Activated CD4-positive, alpha-beta T cell treated with anti-CD3 and anti-CD28 coated beads for 36 hours (primary cell): ENCODE measurements at regions of chr1 and their contacts with region 1.

Region 1: DNA sequence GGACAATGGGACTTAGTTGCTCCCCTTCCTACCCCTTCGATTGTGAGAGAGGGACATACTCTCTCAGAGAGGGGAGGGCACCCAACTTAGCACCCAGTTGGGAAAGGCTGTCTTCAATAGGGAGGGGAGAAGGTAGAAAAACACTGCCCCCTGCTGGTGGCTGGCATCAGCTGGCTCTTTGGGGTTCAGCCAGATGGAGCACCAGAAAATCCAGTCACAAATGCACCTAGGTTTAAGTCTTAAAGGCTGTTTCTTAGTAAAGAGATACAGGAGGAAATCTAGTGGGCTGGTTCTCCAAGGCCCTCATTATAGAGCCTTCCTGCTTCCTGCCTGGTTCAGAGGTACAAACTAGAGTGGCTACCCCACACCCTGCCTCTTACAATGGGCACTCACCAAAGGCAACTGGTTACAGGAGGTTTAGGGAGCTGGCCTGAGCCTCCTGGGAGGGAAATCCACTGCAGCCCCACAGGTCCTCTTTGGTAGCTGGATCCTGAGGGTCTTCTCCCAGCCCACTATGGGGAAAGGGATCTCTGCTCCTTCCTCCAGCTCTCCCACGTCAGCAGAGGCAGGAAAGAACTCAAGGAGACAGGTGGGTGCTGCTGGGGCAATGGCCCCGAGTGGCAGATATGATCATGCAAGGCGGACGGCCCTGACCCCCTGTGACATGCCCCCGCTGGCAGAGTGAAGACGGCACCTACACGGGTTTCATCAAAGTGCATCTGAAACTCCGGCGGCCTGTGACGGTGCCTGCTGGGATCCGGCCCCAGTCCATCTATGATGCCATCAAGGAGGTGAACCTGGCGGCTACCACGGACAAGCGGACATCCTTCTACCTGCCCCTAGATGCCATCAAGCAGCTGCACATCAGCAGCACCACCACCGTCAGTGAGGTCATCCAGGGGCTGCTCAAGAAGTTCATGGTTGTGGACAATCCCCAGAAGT is 28.3 kb downstream of the EIF2D start:
- DNase-seq: peak; percentile 93
- ATAC-seq: peak; percentile 31
- H3K4me3 Mint-ChIP-seq: peak overlapping the region; percentile 65
- H3K27ac Mint-ChIP-seq: peak overlapping the region; percentile 99
- H3K4me1 Mint-ChIP-seq: peaks cover 87% of the 10 kb centered on the region
- H3K27me3 Mint-ChIP-seq: no peaks in the 10 kb centered on the region

Region 2: DNA sequence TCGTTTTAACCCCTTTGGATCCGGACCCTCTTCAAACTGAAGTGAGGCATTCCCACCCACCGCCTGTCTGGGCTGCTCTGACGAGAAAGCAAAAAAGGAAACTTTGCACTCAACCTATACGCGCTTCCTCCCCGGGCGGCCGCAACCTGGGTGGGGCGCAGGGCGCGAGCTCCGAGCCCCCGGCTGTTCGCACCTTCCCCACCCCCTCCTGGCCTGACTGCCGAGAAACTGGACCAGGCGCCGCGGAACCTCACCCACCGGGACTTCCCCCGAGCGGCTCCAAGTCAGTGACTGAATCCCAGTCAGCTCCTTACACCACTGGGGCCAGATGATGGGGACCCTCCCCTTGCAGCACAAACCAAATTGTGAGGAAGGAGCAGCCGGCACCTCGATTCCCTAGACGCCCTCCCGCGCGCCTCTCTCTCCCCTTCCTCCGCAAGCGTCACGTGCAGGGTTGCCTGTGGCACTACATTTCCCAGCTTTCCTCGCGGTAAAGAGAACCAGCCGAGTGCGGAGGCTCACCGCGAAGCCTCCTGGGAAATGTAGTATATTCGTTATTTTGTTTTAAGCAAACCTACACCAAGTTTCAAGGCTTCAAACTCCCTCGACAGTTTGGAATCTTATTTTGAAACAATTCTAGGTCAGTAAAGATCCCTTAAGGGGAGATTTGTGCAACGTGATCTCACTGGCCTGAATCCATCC is 808.8 kb before region 1 on chr1 and contains the start of gene RAB29:
- CTCF ChIA-PET with region 1: no interaction called
- POLR2A ChIA-PET with region 1: no interaction called
- intact Hi-C with region 1: loop called in 1 of 2 experiments (anchors 10 kb)
- DNase-seq: peak; percentile 93
- ATAC-seq: peak; percentile 80
- H3K4me3 Mint-ChIP-seq: peak within 1 kb of the TSS; percentile 89
- H3K27ac Mint-ChIP-seq: peak within 1 kb of the TSS; percentile 90
- H3K4me1 Mint-ChIP-seq: peaks cover 55% of the 10 kb centered on the region
- H3K27me3 Mint-ChIP-seq: no peaks in the 10 kb centered on the region
- total RNA-seq, gene RAB29: 29.3 to 29.4 TPM

Region 3: DNA sequence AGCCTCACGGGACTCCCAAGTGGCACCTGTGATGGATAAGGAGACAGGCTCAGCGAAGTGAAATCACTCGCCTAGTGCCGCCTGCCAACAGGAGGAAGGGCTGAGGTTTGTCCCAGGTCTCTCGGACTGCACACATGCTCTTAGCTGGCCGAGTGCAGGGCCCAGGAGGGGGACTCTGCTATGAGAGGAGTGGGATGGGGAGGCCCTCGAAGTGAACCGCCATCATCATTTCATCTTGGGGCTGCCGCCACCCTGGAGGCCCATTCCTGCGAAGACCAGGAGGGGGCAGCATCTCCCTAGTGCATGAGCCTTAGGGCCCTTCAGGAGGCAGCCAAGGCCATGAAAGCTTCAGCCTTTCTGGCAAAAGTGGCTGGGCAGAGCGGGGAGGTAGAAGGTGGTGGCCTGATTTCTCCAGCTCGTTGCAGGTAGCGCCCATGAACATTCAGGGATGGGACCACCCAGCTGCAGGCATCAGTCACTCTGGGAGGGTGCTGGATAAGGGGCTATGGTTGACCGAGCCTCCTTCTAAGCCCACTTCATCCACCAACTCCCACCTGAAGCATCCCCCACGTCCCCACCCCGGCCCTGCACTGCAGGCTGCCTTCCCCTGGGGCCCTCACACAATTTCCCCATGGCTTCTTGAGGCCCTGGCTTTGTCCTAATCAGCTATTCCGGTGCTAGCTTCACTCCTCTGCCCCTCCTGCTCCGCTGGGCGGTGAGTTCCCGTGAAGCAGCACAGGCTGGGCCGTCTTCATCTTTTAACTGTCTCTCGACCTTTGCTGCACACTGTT is 93.8 kb before region 1 on chr1:
- CTCF ChIA-PET with region 1: interaction called, 49 read pairs
- POLR2A ChIA-PET with region 1: no interaction called
- intact Hi-C with region 1: loop called (anchors 1 to 5 kb)
- DNase-seq: peak; percentile 89
- ATAC-seq: peak; percentile 95
- H3K4me3 Mint-ChIP-seq: no peak overlapping the region
- H3K27ac Mint-ChIP-seq: no peak overlapping the region
- H3K4me1 Mint-ChIP-seq: no peaks in the 10 kb centered on the region
- H3K27me3 Mint-ChIP-seq: no peaks in the 10 kb centered on the region

Region 4: DNA sequence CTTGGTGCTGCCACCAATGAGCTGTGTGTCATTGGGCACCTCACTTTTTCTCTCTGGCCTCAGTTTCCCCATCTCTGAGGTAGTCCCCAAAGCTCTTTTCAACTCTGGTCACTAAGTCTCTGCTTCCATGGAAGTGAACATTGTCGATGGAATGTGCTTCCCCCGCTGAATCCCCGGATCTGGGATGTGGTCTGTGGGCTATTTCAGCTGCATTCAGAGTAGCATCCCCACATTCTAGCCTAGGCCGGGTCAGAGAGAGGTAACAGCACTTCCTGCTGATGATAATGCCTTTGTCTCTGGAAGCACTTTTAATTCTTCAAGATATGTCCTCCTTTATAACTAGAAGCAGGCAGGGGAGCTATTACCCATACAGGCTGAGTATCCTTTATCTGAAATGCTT is 46.8 kb before region 1 on chr1:
- CTCF ChIA-PET with region 1: interaction called, 198 read pairs
- POLR2A ChIA-PET with region 1: interaction called, 5 read pairs
- intact Hi-C with region 1: no loop called
- DNase-seq: no peak
- ATAC-seq: no peak
- H3K4me3 Mint-ChIP-seq: no peak overlapping the region
- H3K27ac Mint-ChIP-seq: no peak overlapping the region
- H3K4me1 Mint-ChIP-seq: peaks cover 9% of the 10 kb centered on the region
- H3K27me3 Mint-ChIP-seq: no peaks in the 10 kb centered on the region

Region 5: DNA sequence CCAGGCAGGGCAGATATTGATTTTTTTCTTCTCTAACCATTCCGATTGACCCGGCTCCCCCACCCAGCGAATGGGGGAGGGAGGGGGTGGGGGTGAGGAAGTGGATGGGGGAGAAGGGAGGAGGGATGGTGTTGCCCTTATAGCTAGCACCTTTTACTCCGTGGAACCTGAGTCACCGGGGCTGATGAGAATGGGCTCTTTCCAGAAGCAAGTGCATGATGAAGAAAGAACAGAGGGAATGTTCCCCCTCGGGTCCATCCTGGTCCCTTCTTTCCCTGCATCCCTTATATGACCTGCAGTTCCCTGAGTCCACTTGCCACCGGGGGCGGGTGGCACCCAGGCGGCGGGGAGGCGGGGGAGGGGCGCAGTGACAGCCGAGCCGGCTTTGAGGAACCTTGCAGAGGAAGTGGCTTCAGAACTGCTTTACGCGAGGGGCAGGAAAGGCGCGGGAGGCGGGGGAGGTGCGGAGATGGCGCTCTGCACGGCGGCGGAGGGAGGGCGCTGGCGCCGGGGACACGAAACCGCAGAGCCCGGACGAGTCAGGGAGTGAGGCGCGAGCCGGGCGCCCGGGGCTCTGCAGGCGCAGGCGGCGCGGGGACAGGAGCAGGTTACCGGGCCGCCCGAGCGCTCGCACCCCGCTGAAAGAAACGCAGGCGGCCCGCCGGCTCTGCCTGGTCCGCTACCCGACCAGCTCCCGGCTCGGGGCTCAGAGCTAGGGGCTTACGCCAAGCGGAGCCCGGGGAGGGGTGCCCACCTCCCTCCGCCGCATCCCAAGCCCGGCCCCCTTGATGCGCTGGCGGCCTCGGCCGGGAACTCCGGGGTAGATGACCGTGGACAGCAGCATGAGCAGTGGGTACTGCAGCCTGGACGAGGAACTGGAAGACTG is 27.0 kb before region 1 on chr1:
- CTCF ChIA-PET with region 1: interaction called, 621 read pairs
- POLR2A ChIA-PET with region 1: interaction called, 129 read pairs
- intact Hi-C with region 1: loop called in 1 of 2 experiments (anchors 1 kb)
- DNase-seq: peak; percentile 95
- ATAC-seq: peak; percentile 43
- H3K4me3 Mint-ChIP-seq: peak overlapping the region; percentile 95
- H3K27ac Mint-ChIP-seq: peak overlapping the region; percentile 99
- H3K4me1 Mint-ChIP-seq: peaks cover 66% of the 10 kb centered on the region
- H3K27me3 Mint-ChIP-seq: no peaks in the 10 kb centered on the region